GM23248 (cell line): ENCODE measurements at regions of chr7 and their contacts with region 1.

Region 1: GRCh38 chr7:87420173-87420572 is 55.3 kb downstream of the ABCB4 start:
- DNase-seq: no peak
- H3K4me3 ChIP-seq: no peak overlapping the region
- H3K27ac ChIP-seq: no peak overlapping the region
- H3K4me1 ChIP-seq: no peaks in the 10 kb centered on the region
- H3K27me3 ChIP-seq: no peaks in the 10 kb centered on the region

Region 2: GRCh38 chr7:86720306-86720705 is 699.9 kb before region 1 on chr7:
- in situ Hi-C with region 1: no loop called
- DNase-seq: no peak
- H3K4me3 ChIP-seq: no peak overlapping the region
- H3K27ac ChIP-seq: no peak overlapping the region
- H3K4me1 ChIP-seq: no peaks in the 10 kb centered on the region
- H3K27me3 ChIP-seq: no peaks in the 10 kb centered on the region

Region 3: DNA sequence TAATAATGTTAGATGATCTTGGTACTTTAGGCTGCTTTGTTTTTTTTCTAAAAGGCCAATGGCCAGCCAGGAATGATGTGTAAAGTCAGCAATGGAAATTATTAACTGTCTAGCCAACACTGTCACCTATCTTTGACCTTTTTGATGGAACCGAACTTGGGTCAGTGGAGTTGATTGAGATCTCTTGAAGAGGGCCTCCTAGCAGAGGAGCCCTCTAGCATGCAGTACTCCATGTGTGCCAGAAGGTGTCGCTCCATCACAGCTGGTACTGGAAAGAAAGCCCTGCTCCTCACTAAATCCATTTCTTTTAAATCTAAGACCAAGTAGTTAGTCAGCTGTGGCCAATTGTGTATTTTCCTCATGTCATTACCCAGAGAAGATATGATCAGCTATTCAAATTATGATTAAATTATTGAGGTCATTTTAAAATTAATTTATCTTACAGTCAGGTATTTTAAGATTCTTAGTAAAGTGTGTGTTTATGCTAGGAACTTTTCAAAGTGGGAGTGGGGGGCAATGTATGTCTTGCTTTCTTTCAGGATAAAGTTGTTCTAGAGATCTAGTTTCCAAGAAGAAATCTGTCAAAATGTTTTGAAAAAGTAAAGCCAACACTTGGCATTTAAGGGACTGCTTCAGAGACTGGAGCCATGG is 107.8 kb before region 1 on chr7:
- in situ Hi-C with region 1: loop called (anchors 5 kb)
- DNase-seq: peak; percentile 74
- H3K4me3 ChIP-seq: no peak overlapping the region
- H3K27ac ChIP-seq: no peak overlapping the region
- H3K4me1 ChIP-seq: peaks cover 19% of the 10 kb centered on the region
- H3K27me3 ChIP-seq: no peaks in the 10 kb centered on the region; the same call in 1 of the 2 replicates